H1 (cell line): ENCODE measurements at regions of chr17 and their contacts with region 1.

Region 1: GRCh38 chr17:81512560-81513371 is at the start of gene ACTG1:
- DNase-seq: peak in 1 of 2 experiments; percentile 91
- H3K4me3 ChIP-seq: peak within 1 kb of the TSS; percentile 75 to 93 (median 90)
- H3K27ac ChIP-seq: peak within 1 kb of the TSS; percentile 89
- H3K4me1 ChIP-seq: peaks cover 0 to 20% (median 11%) of the 10 kb centered on the region in 4 experiments; a peak in 5 of 7 replicates
- H3K27me3 ChIP-seq: peaks cover 0 to 3% (median under 1%) of the 10 kb centered on the region in 4 experiments; a peak in 2 of 7 replicates
- CTCF ChIP-seq: no peak
- EP300 ChIP-seq: peak in 1 of 2 experiments; percentile 64; a peak in 1 of 3 replicates
- POLR2A ChIP-seq: peak; percentile 97
- RAD21 ChIP-seq: no peak
- total RNA-seq, gene ACTG1: 3,535 and 3,691 TPM in 2 replicates

Region 2: DNA sequence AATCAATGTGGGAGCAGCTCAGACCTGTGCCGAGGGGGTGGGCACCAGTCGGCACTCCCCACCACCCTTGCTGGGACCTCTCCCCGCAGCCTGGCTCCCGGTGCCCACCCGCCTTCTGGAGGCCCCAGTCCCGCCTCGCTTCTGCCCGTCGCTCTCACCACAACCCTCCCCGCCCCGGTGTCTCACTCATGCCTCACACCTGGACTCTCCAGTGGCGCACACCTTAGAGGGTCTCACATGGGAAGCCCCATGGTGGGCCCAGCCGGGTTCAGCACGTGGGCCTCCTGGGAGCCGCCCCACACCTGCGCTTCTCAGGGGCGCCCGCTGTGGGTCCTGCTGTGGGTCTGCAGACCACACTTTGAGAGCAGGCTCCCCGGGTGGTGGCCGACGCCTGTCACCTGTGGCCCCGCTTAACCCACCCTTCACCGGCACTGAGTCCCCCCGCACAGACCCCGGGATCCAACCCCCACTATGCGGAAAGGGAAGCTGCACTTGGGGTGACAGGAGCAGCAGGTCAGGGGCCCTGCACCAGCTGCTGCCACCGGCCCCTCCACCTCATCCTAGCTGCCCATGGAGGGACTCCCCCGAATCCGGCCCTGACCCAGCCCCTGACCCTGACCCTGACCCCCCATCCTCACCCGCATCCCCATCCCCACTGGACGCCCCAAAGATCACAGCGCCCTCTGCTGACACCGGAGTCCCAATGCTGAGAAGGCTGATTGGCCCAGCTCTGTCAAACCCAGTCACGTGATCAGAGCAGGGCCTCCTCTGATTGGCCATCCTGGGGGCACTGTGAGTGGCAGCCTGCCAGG is 190.3 kb before region 1 on chr17:
- CTCF ChIA-PET with region 1: no interaction called
- POLR2A ChIA-PET with region 1: interaction called, 11 read pairs
- DNase-seq: peak in 1 of 2 experiments; percentile 71
- H3K4me3 ChIP-seq: no peak overlapping the region
- H3K27ac ChIP-seq: no peak overlapping the region
- H3K4me1 ChIP-seq: peaks cover 0 to 6% (median 2%) of the 10 kb centered on the region in 4 experiments; a peak in 5 of 7 replicates
- H3K27me3 ChIP-seq: 0 out of 7 replicates have a peak, but pooled peaks cover 0 to 2% (median 0%) of the 10 kb centered on the region in 4 experiments
- CTCF ChIP-seq: peak; percentile 33 to 69 (median 64)
- EP300 ChIP-seq: no peak
- POLR2A ChIP-seq: no peak
- RAD21 ChIP-seq: peak in 1 of 2 experiments; percentile 38; a peak in 2 of 4 replicates

Region 3: DNA sequence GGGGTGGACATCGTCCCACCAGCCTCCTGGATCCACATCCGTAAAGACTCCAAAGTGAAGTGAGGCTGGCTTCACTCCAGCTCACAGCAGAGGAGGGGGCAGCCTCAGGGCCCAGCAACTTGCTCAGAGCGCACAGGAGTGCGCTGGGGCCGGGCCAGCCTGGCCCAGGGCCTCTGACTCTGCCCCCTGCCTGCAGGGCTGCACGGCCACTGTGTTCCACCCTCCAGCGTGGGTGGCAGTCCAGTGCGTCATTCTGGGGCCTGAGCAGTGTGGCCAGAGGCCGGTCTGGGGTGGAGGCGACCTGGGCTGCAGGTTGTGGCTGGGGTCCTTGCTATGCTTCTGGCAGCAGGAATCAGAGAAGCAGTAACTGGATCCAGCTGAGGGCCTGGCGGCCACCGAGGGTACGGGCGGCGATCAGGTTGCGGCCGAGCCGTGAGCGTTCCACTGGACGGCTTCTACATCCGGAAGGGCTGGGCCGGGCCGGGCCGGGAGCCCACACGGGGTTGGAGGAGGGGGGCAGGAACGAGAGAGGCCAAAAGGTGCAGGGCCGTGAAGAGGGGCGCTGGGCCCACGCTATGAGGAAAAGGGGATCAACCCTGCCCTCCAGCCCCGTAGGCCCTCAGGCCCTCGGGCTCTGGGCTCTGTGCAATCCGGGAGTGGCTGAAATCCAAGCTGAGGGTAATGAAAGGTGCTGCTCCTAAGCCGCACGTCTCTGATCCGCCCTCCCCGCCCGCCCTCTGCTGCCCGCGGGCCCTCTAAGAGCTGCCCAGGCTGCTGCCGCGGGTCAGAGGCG is 15.0 kb after region 1 on chr17 and contains the start of gene FSCN2:
- CTCF ChIA-PET with region 1: interaction called, 5 read pairs
- POLR2A ChIA-PET with region 1: interaction called, 1,004 read pairs
- DNase-seq: no peak
- H3K4me3 ChIP-seq: no peak within 1 kb of the TSS
- H3K27ac ChIP-seq: no peak within 1 kb of the TSS
- H3K4me1 ChIP-seq: peaks cover 0 to 11% (median 5%) of the 10 kb centered on the region in 4 experiments; a peak in 5 of 7 replicates
- H3K27me3 ChIP-seq: peaks cover 0 to 1% (median 0%) of the 10 kb centered on the region in 4 experiments; a peak in 3 of 7 replicates
- CTCF ChIP-seq: no peak
- EP300 ChIP-seq: no peak
- POLR2A ChIP-seq: no peak
- RAD21 ChIP-seq: no peak
- total RNA-seq, gene FSCN2: 0.30 TPM in 1 of 2 replicates, not detected in the other

Region 4: DNA sequence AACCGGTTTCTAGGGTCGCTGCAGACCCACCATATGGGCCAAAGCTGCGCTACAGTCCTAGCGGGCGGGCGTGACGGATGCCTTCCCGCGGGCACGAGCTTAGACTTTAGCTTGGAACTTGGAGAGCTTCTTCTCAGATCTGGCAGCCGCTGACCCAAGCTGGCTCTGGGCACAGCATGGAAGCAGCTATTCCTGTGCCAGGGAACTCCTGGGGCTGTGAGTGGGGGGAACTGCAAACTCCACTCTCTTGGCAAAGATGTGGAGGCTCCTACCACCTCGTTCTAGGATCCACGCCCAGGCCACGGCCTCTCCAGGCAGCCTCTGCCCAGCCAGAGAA is 30.5 kb after region 1 on chr17:
- CTCF ChIA-PET with region 1: interaction called, 33 read pairs
- POLR2A ChIA-PET with region 1: interaction called, 125 read pairs
- DNase-seq: no peak
- H3K4me3 ChIP-seq: no peak overlapping the region
- H3K27ac ChIP-seq: no peak overlapping the region
- H3K4me1 ChIP-seq: no peaks in the 10 kb centered on the region
- H3K27me3 ChIP-seq: no peaks in the 10 kb centered on the region; a peak in 1 of 7 replicates
- CTCF ChIP-seq: no peak
- EP300 ChIP-seq: no peak
- POLR2A ChIP-seq: no peak
- RAD21 ChIP-seq: no peak

Region 5: GRCh38 chr17:81794509-81794908 is 281.7 kb after region 1 on chr17:
- CTCF ChIA-PET with region 1: no interaction called
- POLR2A ChIA-PET with region 1: no interaction called
- DNase-seq: no peak
- H3K4me3 ChIP-seq: no peak overlapping the region
- H3K27ac ChIP-seq: no peak overlapping the region
- H3K4me1 ChIP-seq: no peaks in the 10 kb centered on the region
- H3K27me3 ChIP-seq: peaks cover 0 to 4% (median 0%) of the 10 kb centered on the region in 4 experiments; a peak in 1 of 7 replicates
- CTCF ChIP-seq: no peak
- EP300 ChIP-seq: no peak
- POLR2A ChIP-seq: no peak
- RAD21 ChIP-seq: no peak